Spleen (tissue), 13 donors: ENCODE measurements at regions of chr5 and their contacts with region 1.

Region 1: DNA sequence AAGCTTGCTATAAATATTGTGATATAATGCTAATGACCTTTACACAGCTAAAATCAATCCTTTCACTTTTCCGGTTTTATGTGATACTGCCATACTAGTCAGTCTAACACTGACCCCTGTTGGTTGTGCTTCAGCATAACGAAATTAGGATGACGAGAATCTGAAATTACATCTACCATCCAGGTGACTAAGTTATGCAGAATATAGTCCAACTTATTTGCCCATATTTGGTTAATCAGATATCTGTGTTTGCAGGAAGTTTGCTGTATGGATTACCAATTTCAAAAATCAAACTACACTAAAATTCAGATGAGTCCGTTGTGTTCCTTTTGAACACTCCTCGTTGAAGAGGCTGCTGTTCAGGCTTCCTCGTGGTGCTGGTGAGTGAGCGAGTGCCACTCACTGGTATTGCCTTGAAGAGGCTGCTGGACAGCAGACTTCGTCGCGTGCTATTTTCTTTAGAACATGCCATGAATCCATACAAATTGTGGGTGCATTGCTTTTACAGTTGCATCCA is 32.5 kb downstream of the TENT4A start:
- DNase-seq: peak; percentile 32
- H3K4me3 ChIP-seq: no peak overlapping the region
- H3K27ac ChIP-seq: peak overlapping the region in 1 of 8 donors; percentile 15
- H3K4me1 ChIP-seq: peaks cover 0 to 12% (median 6%) of the 10 kb centered on the region in 6 donors
- H3K27me3 ChIP-seq: no peaks in the 10 kb centered on the region
- CTCF ChIP-seq: peak; percentile 43 to 78 (median 72)
- POLR2A ChIP-seq: no peak

Region 2: DNA sequence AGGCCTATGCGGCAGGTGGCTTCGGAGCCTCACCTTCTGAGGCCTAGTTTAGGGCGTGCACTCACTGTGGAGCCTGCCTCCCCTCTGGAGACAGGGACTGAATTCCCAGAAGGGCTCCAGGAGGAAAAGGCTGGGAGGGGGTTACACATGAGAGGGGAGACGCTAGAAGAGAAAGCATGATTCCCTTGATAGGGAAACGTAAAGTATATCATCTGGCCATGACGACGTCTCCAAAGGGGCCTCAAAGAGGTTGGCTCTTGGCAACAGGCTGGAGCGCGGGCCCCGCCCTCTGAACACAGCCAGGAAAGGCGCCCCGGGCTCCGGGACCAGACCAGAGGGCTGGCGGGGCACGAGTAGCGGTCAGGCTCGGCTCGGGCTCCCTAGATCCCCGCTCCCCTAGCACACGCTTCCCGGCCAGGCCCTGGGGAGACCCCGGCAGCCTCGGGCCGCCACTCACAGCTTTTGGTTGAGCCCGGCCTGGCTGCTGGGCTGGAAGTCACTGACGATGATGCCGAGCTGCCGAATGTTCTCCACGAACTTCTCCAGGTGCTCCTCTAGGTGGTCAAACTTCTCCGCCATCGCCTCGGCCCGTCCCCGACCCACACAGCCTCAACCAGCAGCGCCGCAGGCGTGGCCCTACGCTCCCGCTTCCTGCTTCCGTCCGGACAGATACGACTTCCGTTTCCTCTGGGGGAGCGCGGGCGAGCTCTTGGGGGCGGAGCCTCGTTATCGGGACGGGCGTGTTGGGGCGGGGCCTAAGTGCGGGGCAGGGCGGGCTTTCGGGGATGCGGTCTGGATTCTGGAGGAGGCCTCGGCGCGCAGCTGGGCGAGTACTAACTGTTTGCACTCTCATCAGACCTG is 367.6 kb before region 1 on chr5 and contains the start of gene MED10:
- intact Hi-C with region 1: loop called (anchors 10 kb)
- DNase-seq: peak; percentile 98
- H3K4me3 ChIP-seq: peak within 1 kb of the TSS; percentile 94 to 100 (median 98)
- H3K27ac ChIP-seq: peak within 1 kb of the TSS; percentile 79 to 94 (median 89)
- H3K4me1 ChIP-seq: peaks cover 16 to 50% (median 31%) of the 10 kb centered on the region in 6 donors
- H3K27me3 ChIP-seq: peaks cover 0 to 2% (median 0%) of the 10 kb centered on the region in 7 donors
- CTCF ChIP-seq: no peak
- POLR2A ChIP-seq: peak in 1 of 3 donors; percentile 44
- total RNA-seq, gene MED10: 31.9 to 47.5 (median 35.1) TPM